ENCODE measurements at regions of chr2 and their contacts with region 1.

Region 1: GRCh38 chr2:37005118-37005868 is 39.0 kb upstream of the STRN start:
- DNase-seq: peak; percentile 54
- H3K4me3 Mint-ChIP-seq: peak overlapping the region; percentile 23
- H3K27ac Mint-ChIP-seq: peak overlapping the region; percentile 26
- H3K4me1 Mint-ChIP-seq: peaks cover 10% of the 10 kb centered on the region
- H3K27me3 Mint-ChIP-seq: no peaks in the 10 kb centered on the region

Region 2: GRCh38 chr2:36741188-36741837 is 264.0 kb before region 1 on chr2:
- CTCF ChIA-PET with region 1: no interaction called
- intact Hi-C with region 1: no loop called
- DNase-seq: no peak
- H3K4me3 Mint-ChIP-seq: no peak overlapping the region
- H3K27ac Mint-ChIP-seq: no peak overlapping the region
- H3K4me1 Mint-ChIP-seq: peaks cover 12% of the 10 kb centered on the region
- H3K27me3 Mint-ChIP-seq: peaks cover 39% of the 10 kb centered on the region

Region 3: GRCh38 chr2:36858551-36859365 is 146.5 kb before region 1 on chr2:
- CTCF ChIA-PET with region 1: no interaction called
- intact Hi-C with region 1: loop called (anchors 5 kb)
- DNase-seq: no peak
- H3K4me3 Mint-ChIP-seq: no peak overlapping the region
- H3K27ac Mint-ChIP-seq: peak overlapping the region; percentile 52
- H3K4me1 Mint-ChIP-seq: peaks cover 17% of the 10 kb centered on the region
- H3K27me3 Mint-ChIP-seq: no peaks in the 10 kb centered on the region

Region 4: DNA sequence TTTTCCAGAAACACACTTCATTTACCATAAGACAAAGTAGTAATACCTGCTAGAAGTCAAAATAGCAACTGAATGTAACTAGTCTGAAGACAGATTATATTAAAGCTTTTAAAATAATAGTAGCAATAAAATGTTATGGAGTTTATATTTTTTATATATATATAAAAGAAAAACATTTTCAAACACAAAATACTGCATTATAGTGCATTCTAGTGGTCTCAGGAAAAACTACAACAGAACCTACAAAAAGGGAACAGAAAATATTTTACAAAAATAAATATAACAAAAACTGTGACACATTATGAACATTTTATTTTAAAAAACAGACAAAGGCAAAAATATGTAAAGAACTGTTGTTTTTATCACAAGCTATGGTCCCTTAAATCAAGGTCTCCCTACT is 87.0 kb before region 1 on chr2:
- CTCF ChIA-PET with region 1: no interaction called
- intact Hi-C with region 1: loop called (anchors 5 kb)
- DNase-seq: no peak
- H3K4me3 Mint-ChIP-seq: no peak overlapping the region
- H3K27ac Mint-ChIP-seq: no peak overlapping the region
- H3K4me1 Mint-ChIP-seq: peaks cover 19% of the 10 kb centered on the region
- H3K27me3 Mint-ChIP-seq: no peaks in the 10 kb centered on the region

Region 5: GRCh38 chr2:37083873-37084794 is 78.8 kb after region 1 on chr2 and contains the starts of genes GPATCH11 and HEATR5B:
- CTCF ChIA-PET with region 1: no interaction called
- intact Hi-C with region 1: loop called (anchors 5 kb)
- DNase-seq: peak; percentile 93
- H3K4me3 Mint-ChIP-seq: no peak within 1 kb of the TSS
- H3K27ac Mint-ChIP-seq: no peak within 1 kb of the TSS
- H3K4me1 Mint-ChIP-seq: peaks cover 26% of the 10 kb centered on the region
- H3K27me3 Mint-ChIP-seq: no peaks in the 10 kb centered on the region
- total RNA-seq, gene GPATCH11: 9.8 to 10.4 TPM
- total RNA-seq, gene HEATR5B: 15.5 to 15.8 TPM

Measured in activated naive CD4-positive, alpha-beta T cell treated with anti-CD3 and anti-CD28 coated beads for 36 hours (primary cell).